ENCODE measurements at regions of chr19 and their contacts with region 1.

Region 1: GRCh38 chr19:38514812-38515633 is 81.5 kb downstream of the RYR1 start:
- DNase-seq: peak; percentile 69
- H3K4me3 Mint-ChIP-seq: no peak overlapping the region
- H3K27ac Mint-ChIP-seq: no peak overlapping the region
- H3K4me1 Mint-ChIP-seq: peaks cover 21% of the 10 kb centered on the region
- H3K27me3 Mint-ChIP-seq: peaks cover 9% of the 10 kb centered on the region

Region 2: GRCh38 chr19:38417544-38418506 is 97.2 kb before region 1 on chr19:
- intact Hi-C with region 1: no loop called
- DNase-seq: peak; percentile 68
- H3K4me3 Mint-ChIP-seq: peak overlapping the region; percentile 84
- H3K27ac Mint-ChIP-seq: peak overlapping the region; percentile 80
- H3K4me1 Mint-ChIP-seq: peaks cover 26% of the 10 kb centered on the region
- H3K27me3 Mint-ChIP-seq: no peaks in the 10 kb centered on the region

Region 3: GRCh38 chr19:38538793-38539528 is 23.9 kb after region 1 on chr19:
- intact Hi-C with region 1: loop called (anchors 1 kb)
- DNase-seq: peak; percentile 46
- H3K4me3 Mint-ChIP-seq: peak overlapping the region; percentile 57
- H3K27ac Mint-ChIP-seq: peak overlapping the region; percentile 92
- H3K4me1 Mint-ChIP-seq: peaks cover 40% of the 10 kb centered on the region
- H3K27me3 Mint-ChIP-seq: peaks cover 7% of the 10 kb centered on the region

Region 4: DNA sequence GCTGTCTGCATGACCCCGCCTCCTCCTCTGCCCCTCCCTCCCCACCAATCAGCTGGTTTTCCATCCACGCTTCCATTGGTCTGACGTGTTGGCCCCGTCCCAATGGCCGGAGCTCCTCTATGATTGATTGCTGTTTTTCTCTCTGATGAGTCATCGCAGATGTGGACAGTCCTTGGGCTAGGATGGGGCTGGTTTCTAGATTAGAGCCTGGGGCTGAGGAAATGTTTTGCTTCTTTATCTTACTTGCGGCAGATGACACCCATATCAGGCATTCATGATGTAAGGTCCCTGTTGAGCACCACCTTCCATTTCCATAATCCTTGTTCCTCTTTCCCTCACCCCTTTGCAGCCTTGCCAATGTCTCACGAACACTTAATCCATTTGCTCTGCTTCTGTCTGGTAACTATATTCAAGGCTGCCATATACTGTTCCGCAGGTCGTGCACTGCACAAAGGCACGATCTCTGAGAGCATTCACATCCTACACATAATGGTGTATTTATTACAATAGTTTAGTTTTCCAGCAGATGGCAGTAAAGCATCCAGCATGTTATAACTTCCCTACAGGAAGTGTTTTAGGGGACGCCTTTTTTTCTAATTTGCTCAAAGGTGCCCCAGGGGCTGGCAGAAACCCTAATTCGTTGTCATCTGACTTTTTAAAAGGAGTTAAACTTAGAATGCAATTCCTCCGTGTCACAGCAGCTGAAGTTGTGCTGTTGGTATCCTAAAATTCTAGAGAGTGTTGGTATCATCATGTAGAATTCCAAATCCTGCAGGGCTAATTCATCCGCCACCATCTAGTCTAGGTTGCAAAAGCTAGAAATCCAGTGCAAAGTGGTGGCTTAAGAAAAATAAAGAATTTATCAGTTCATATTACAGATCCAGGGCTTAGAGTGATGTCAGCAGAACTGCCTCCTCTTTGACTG is 29.3 kb after region 1 on chr19:
- intact Hi-C with region 1: loop called (anchors 1 kb)
- DNase-seq: no peak
- H3K4me3 Mint-ChIP-seq: peak overlapping the region; percentile 63
- H3K27ac Mint-ChIP-seq: peak overlapping the region; percentile 46
- H3K4me1 Mint-ChIP-seq: peaks cover 29% of the 10 kb centered on the region
- H3K27me3 Mint-ChIP-seq: no peaks in the 10 kb centered on the region

Region 5: DNA sequence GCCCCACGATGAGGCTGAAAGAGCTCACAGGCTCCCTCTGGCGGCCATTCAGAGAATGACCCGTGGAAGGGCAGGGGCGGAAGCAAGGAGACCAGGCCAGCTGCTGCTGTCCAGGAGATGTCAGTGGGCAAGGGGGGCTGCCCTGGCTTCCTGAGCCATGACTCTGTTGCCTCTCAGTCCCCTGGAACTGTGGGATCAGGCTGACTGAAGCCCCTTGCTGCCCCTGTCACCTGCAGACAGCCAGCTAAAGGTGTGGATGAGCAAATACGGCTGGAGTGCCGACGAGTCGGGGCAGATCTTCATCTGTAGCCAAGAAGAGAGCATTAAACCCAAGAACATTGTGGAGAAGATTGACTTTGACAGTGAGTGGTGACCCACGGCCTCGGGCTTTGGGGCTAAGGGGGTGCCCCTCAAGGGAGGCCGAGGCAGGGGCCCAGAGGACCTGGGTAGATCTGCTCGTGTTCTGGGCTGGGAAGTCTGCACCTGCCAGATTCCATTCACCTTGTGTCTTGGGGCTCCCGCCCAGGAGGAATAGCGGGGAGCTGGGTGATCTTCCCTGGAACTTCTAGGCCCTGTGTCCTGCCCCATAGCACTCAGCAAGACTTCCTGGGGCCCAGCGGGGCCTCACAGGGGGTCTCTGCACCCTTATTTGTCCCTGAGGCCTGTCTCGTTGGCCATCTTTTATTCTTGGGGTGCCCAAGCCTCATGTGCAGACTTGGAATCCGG is 119.9 kb after region 1 on chr19:
- intact Hi-C with region 1: loop called (anchors 1 kb)
- DNase-seq: peak; percentile 68
- H3K4me3 Mint-ChIP-seq: peak overlapping the region; percentile 43
- H3K27ac Mint-ChIP-seq: peak overlapping the region; percentile 83
- H3K4me1 Mint-ChIP-seq: peaks cover 36% of the 10 kb centered on the region
- H3K27me3 Mint-ChIP-seq: no peaks in the 10 kb centered on the region

Region 6: GRCh38 chr19:38683393-38684080 is 168.5 kb after region 1 on chr19:
- intact Hi-C with region 1: no loop called
- DNase-seq: no peak
- H3K4me3 Mint-ChIP-seq: peak overlapping the region; percentile 31
- H3K27ac Mint-ChIP-seq: peak overlapping the region; percentile 23
- H3K4me1 Mint-ChIP-seq: peaks cover 92% of the 10 kb centered on the region
- H3K27me3 Mint-ChIP-seq: no peaks in the 10 kb centered on the region

Region 7: GRCh38 chr19:38949580-38950367 is 434.8 kb after region 1 on chr19:
- intact Hi-C with region 1: loop called (anchors 1 kb)
- DNase-seq: peak; percentile 79
- H3K4me3 Mint-ChIP-seq: peak overlapping the region; percentile 59
- H3K27ac Mint-ChIP-seq: no peak overlapping the region
- H3K4me1 Mint-ChIP-seq: peaks cover 15% of the 10 kb centered on the region
- H3K27me3 Mint-ChIP-seq: peaks cover 21% of the 10 kb centered on the region